ENCODE measurements at regions of chr1 and their contacts with region 1.

Region 1: DNA sequence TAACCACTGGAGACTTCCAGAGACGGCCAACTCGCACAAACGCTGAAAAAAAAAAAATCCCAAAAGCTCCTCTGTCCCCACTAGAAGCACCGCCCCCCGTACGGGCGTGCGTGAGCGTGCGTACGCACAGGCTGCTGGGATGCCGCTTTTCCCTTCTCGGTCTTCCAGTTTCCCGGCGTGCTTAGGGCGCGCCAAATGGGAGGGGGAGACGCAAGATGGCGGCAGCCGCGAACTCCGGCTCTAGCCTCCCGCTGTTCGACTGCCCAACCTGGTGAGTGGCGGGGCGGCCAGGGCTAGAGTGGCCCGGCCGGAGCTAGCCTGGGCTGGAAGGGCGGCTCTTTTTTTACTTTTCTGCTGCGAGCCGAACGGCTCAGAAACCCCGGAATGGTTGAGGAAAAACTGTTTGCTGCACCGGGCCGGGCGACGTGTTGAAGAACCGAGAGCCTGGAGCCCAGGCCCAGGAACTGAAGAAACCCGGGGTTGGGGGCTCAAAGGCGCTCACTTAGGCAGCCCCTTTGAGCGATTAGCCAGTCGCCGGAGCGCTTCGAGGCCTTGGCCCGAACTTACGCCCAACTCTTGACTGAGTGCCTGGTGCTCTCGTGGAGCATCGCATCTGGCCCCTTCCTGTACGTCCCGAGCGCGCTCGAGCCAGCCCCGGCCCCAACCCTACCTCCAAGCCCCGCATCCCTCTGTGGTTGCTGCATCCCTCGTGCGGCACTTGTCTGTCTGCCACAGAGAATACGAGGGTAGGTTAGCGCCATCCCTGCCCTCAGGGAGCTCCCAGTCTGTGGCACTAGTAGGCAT is at the start of gene PPP1R8:
- DNase-seq: peak; percentile 89
- H3K4me3 Mint-ChIP-seq: peak within 1 kb of the TSS; percentile 93
- H3K27ac Mint-ChIP-seq: peak within 1 kb of the TSS; percentile 83
- H3K4me1 Mint-ChIP-seq: peaks cover 37% of the 10 kb centered on the region
- H3K27me3 Mint-ChIP-seq: no peaks in the 10 kb centered on the region
- total RNA-seq, gene PPP1R8: 48.5 to 51.2 TPM

Region 2: DNA sequence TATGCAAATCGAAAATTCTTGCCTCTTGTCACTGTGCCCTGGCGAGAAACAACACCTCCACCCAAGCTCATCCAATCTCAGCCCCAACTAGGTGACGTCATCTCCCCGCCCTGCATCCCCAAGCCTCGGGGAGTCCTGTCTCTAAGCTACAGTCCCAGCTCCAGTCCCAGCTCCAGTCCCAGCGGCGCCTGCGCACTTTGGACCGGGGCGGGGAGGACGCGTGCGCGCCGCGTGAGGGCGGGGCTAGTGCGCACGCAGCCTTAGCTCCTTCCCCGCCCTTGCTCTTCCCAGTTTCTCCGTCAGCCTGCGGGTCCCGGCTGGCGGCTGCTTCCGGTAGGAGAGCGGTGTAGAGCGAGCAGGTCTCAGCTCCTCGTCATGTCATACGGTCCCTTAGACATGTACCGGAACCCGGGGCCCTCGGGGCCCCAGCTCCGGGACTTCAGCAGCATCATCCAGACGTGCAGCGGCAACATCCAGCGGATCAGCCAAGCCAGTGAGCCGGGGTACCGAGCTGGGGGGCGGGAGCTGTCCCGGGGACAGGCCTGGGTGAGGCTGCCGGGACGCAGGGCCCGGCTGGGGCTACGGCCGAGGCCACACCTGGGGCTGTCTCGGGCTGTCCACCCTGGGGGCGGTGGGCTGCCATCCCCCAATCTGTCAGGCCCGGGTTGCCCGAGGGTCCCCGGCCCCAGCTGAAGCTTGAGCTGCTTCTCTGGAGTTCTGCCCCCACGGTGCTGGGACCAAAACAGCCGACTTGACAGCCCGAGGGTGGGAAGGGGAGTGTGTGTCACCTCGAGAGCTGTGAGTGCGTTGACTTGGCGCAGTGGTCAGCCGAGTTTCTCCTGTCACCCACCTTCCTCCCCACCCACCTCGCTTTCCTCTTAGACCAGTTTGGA is 57.6 kb before region 1 on chr1 and contains the start of gene STX12:
- CTCF ChIA-PET with region 1: interaction called, 3 read pairs
- POLR2A ChIA-PET with region 1: interaction called, 35 read pairs
- DNase-seq: peak; percentile 100
- H3K4me3 Mint-ChIP-seq: peak within 1 kb of the TSS; percentile 94
- H3K27ac Mint-ChIP-seq: peak within 1 kb of the TSS; percentile 94
- H3K4me1 Mint-ChIP-seq: peaks cover 33% of the 10 kb centered on the region
- H3K27me3 Mint-ChIP-seq: no peaks in the 10 kb centered on the region
- total RNA-seq, gene STX12: 32.0 to 33.1 TPM